Mammary epithelial cell (primary cell): ENCODE measurements at regions of chr5 and their contacts with region 1.

Region 1: DNA sequence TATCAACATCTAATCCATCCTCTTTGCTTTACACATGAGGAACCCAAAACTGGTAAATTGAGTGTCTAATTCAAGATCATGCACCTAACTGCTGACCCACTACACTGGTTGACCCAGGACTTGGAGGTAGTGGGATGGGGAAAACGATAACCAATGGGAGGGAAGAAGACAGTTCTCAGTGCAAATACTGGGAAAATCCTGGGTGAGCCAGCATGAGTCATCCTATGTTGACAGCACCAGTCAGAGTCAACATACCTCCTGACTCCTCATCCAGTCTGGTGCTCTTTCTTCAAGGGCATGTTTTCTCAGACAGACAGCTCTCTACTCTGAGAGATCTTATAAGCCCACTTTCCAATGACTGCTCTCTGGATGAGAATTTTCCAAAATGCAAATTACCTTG is 232.8 kb upstream of the PTGER4 start:
- DNase-seq: peak; percentile 96
- H3K4me3 ChIP-seq: no peak overlapping the region
- H3K27ac ChIP-seq: peak overlapping the region; percentile 74
- H3K4me1 ChIP-seq: peaks cover 11% of the 10 kb centered on the region
- H3K27me3 ChIP-seq: no peaks in the 10 kb centered on the region
- CTCF ChIP-seq: no peak

Region 2: DNA sequence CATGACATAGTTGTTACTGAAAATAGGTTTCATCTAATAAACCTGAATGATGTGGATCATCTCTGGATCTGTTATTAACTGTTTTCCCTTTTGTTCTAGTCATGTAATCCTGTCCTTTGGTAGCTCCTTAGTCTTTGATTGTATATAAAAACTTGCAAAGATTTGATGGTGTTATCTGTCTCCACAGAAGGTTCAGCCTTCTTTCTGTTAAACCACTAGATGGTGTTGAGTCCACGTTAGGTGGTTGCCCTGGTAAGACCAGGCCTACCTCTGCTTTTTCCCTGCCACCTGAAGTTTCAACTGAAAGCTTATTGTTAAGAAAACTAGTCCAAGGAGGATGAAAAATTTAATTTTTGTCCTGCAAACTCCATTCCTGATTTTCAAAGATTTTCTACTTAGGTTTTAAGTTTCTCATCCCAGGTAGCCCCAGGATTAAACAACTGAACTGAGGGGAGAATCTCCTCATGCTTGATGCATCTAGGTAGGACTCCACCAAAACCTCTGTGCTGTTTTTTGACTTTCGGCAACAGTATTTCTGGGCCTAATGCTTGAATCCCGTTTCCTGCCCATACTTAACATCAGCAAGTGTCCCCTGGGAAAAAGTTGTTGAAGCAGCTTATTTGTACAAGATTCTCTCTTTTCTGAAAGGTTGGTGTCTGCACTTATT is 1441.2 kb before region 1 on chr5:
- CTCF ChIA-PET with region 1: interaction called, 18 read pairs
- dilution Hi-C with region 1: no loop called
- in situ Hi-C with region 1: no loop called
- intact Hi-C with region 1: no loop called
- DNase-seq: peak; percentile 5
- H3K4me3 ChIP-seq: no peak overlapping the region
- H3K27ac ChIP-seq: no peak overlapping the region
- H3K4me1 ChIP-seq: no peaks in the 10 kb centered on the region
- H3K27me3 ChIP-seq: no peaks in the 10 kb centered on the region
- CTCF ChIP-seq: peak; percentile 21 to 49

Region 3: DNA sequence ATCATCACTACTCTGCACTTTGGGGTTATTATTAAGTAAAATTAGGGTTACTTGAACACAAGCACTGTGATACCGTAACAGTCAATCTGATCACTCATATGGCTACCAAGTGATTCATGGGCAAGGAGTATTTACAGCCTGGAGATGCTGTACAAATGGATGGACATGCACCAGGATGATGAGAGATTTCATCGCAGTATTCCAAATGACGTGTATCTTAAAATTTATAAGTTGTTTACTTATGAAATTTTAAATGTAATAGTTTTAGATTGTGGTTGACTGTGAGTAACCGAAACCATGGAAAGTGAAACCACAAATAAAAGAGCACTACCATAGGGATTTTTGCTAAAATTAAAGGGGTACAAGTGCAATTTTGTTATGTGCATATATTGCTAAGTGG is 229.4 kb before region 1 on chr5:
- CTCF ChIA-PET with region 1: no interaction called
- dilution Hi-C with region 1: no loop called
- in situ Hi-C with region 1: no loop called
- intact Hi-C with region 1: loop called (anchors 1 kb)
- DNase-seq: no peak
- H3K4me3 ChIP-seq: no peak overlapping the region
- H3K27ac ChIP-seq: no peak overlapping the region
- H3K4me1 ChIP-seq: peaks cover 12% of the 10 kb centered on the region
- H3K27me3 ChIP-seq: no peaks in the 10 kb centered on the region
- CTCF ChIP-seq: no peak